Activated CD8-positive, alpha-beta memory T cell treated with anti-CD3 and anti-CD28 coated beads, Interleukin-2, amount 10 ng/mL, durations not matched to agents 7 days and 5 days (primary cell): ENCODE measurements at regions of chr22 and their contacts with region 1.

Region 1: GRCh38 chr22:46006379-46007002 is 29.5 kb upstream of the WNT7B start:
- DNase-seq: peak; percentile 91
- ATAC-seq: peak; percentile 87
- H3K4me3 Mint-ChIP-seq: no peak overlapping the region
- H3K27ac Mint-ChIP-seq: no peak overlapping the region
- H3K4me1 Mint-ChIP-seq: peaks cover 17% of the 10 kb centered on the region
- H3K27me3 Mint-ChIP-seq: no peaks in the 10 kb centered on the region

Region 2: GRCh38 chr22:45994491-45995404 is 11.7 kb before region 1 on chr22:
- CTCF ChIA-PET with region 1: interaction called, 83 read pairs
- DNase-seq: peak; percentile 79
- ATAC-seq: no peak
- H3K4me3 Mint-ChIP-seq: no peak overlapping the region
- H3K27ac Mint-ChIP-seq: no peak overlapping the region
- H3K4me1 Mint-ChIP-seq: peaks cover 5% of the 10 kb centered on the region
- H3K27me3 Mint-ChIP-seq: peaks cover 7% of the 10 kb centered on the region

Region 3: DNA sequence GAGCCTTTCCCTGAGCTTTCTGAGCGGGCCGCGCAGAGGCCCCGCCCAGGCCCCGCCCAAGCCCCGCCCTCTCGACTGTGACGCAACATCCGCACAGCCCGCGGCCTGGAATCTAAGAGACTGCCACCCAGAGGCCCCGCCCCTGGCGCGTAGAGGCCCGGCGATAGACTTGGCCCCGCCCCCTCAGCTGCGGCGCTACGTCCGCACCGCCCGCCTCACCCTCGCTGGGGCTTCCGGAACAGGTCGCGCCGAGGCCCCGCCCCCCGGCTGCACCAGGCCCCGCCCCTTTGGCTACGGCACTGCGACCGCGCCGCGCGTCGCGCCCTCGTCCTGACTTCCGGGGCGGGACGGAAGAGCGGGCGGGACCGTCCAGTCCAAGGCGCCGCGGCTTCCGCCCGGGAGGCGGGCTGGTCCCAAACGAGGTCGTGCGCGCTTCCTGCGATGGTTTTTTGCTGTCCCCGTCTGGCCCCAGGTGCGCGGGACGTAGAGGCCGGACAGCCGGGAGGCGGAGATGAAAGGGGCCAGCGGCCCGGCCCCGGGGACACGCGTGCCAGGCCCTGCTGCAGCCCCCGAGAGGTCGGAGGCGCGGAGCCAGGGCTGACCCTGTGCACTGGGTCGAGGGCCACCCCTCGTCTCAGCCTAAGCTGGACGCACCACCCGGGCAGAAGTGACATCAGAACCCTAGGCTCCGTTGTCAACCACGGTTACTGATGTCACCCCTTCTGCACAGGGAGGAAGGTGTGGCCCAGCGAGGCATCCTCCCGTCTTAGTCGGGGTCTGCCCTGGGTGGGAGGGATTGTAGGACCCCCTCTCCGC is 29.5 kb after region 1 on chr22:
- CTCF ChIA-PET with region 1: interaction called, 68 read pairs
- DNase-seq: peak; percentile 100
- ATAC-seq: peak; percentile 93
- H3K4me3 Mint-ChIP-seq: peak overlapping the region; percentile 76
- H3K27ac Mint-ChIP-seq: peak overlapping the region; percentile 90
- H3K4me1 Mint-ChIP-seq: peaks cover 13% of the 10 kb centered on the region
- H3K27me3 Mint-ChIP-seq: no peaks in the 10 kb centered on the region

Region 4: GRCh38 chr22:46071451-46072109 is 65.1 kb after region 1 on chr22:
- CTCF ChIA-PET with region 1: interaction called, 25 read pairs
- DNase-seq: peak; percentile 49
- ATAC-seq: peak; percentile 14
- H3K4me3 Mint-ChIP-seq: peak overlapping the region; percentile 73
- H3K27ac Mint-ChIP-seq: peak overlapping the region; percentile 68
- H3K4me1 Mint-ChIP-seq: peaks cover 34% of the 10 kb centered on the region
- H3K27me3 Mint-ChIP-seq: peaks cover 21% of the 10 kb centered on the region

Region 5: DNA sequence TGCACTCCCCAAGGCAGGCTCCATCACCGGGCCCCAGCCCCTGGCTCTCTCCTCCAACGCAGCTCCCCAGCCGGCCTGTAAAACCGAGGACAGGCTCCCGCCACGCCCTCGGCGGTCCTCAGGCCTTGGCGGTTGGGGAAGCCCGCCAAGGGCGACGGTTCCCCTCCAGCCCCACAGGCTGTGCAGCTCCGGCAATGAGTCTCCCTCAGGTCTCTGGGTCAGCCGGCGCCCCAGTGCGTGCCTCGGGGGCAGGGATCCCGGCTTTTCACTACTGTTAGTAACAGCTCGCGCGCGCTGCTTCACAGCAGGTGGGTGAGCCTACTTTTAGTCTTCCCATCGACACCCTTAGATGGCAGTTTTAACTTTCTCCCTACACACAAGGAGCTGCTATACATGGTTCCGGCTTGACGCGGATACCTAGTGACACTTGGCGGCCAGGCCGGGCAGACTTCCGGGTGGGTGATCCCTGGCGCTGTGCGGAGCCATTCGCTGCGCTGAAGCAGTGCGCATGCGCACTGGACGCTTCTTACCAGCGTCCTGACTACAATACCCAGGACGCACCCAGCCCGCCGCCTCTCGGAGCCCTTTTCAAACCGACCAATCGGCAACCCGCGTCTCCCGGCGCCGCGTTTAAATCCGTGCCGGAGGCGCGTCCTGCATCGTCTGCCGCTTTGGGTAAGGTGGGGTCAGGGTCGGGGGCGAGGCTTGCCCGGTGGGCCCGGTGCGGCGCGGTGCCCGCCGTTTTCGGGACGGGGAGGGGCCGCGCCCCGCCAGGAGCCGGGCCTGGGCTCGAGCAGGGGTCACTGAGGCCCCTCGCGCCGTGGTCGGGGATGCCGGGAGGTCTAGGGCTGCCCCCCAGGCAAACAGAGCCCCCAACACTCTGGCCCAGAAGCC is 290.0 kb after region 1 on chr22 and contains the start of gene GTSE1:
- CTCF ChIA-PET with region 1: interaction called, 17 read pairs
- DNase-seq: peak; percentile 99
- ATAC-seq: peak; percentile 98
- H3K4me3 Mint-ChIP-seq: peak within 1 kb of the TSS; percentile 95
- H3K27ac Mint-ChIP-seq: peak within 1 kb of the TSS; percentile 97
- H3K4me1 Mint-ChIP-seq: peaks cover 70% of the 10 kb centered on the region
- H3K27me3 Mint-ChIP-seq: no peaks in the 10 kb centered on the region
- total RNA-seq, gene GTSE1: 91.9 to 101 TPM